Mucosa of descending colon (tissue), 3 donors: ENCODE measurements at regions of chr2 and their contacts with region 1.

Region 1: DNA sequence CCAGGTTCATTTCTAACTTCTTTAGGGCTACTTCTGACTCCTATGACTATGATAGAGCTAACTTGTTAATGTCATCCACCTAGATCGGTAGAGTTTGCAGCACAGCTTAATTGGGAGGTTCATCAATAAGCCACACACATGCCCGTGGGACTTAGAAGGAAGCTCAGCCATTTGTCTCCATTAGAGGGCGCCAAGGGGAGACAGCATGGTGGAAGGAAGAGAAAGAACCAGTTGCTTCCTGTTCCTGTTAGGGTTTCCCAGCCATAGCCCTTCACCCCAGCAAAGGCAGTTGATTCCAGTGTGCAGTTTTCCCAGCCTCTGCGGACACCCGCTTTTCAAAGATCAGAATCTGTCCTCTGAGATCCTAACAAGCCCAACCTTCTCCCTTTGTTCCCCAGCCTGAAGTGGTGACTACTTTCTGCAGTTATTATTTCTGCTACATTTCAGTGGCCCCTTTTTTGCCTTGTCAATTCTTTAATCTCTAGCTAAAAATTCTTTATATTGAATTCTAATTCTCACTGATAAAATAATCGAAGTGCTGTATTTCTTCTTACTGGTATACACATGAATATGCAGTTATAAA is 30.3 kb downstream of the MAIP1 start:
- DNase-seq: peak; percentile 52 to 89 (median 56)
- ATAC-seq: peak; percentile 96
- H3K4me3 ChIP-seq: no peak overlapping the region
- H3K4me1 ChIP-seq: peaks cover 3% of the 10 kb centered on the region
- CTCF ChIP-seq: peak; percentile 11

Region 2: DNA sequence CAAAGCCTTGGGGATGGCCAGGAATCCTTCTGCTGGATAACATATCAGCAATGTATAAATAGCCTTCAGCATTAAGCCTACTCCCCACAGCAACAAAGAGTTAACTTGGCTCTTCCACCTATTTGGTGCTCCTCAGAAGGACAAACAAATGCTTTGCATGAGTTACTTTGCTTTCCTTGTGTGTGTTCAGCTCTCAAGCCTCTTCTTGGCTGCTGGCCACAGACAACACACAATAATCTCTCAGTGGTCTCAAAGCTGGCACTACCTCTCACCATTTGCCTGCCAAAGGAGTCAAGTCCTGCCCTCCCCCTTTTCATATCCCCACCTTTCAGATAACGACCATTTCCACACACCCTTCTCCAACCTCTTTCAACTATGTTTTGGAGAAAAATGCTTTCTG is 152.2 kb before region 1 on chr2:
- intact Hi-C with region 1: no loop called
- DNase-seq: no peak
- ATAC-seq: no peak
- H3K4me3 ChIP-seq: no peak overlapping the region
- H3K4me1 ChIP-seq: no peaks in the 10 kb centered on the region
- CTCF ChIP-seq: no peak

Region 3: GRCh38 chr2:200127848-200128247 is 142.1 kb after region 1 on chr2:
- intact Hi-C with region 1: loop called in 1 of 2 experiments (anchors 10 kb)
- DNase-seq: no peak
- ATAC-seq: no peak
- H3K4me3 ChIP-seq: no peak overlapping the region
- H3K4me1 ChIP-seq: peaks cover 35% of the 10 kb centered on the region
- CTCF ChIP-seq: no peak